ENCODE measurements at regions of chr16 and their contacts with region 1.

Region 1: GRCh38 chr16:89922884-89923690 is at the start of gene TUBB3:
- DNase-seq: peak; percentile 90

Region 2: DNA sequence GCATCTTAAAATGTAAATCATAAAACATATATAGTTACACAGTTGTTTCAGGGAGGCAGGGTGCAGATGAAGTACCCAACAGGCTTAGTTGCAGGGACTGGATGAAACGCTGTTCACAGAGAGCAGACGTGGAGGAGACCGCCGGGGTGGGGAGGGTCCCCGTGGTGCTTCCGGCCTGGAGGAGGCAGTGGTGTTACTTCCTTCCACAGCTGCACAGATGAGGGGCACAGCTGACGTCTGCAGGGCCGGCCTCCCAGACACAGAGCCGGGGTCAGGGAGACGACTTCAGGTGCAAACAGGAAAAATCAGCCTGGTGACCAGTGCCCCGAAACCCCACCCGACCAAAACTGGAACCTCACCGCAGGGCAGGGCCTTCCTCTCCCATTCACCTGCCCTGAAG is 77.7 kb before region 1 on chr16:
- CTCF ChIA-PET with region 1: no interaction called
- POLR2A ChIA-PET with region 1: no interaction called
- DNase-seq: no peak

Region 3: DNA sequence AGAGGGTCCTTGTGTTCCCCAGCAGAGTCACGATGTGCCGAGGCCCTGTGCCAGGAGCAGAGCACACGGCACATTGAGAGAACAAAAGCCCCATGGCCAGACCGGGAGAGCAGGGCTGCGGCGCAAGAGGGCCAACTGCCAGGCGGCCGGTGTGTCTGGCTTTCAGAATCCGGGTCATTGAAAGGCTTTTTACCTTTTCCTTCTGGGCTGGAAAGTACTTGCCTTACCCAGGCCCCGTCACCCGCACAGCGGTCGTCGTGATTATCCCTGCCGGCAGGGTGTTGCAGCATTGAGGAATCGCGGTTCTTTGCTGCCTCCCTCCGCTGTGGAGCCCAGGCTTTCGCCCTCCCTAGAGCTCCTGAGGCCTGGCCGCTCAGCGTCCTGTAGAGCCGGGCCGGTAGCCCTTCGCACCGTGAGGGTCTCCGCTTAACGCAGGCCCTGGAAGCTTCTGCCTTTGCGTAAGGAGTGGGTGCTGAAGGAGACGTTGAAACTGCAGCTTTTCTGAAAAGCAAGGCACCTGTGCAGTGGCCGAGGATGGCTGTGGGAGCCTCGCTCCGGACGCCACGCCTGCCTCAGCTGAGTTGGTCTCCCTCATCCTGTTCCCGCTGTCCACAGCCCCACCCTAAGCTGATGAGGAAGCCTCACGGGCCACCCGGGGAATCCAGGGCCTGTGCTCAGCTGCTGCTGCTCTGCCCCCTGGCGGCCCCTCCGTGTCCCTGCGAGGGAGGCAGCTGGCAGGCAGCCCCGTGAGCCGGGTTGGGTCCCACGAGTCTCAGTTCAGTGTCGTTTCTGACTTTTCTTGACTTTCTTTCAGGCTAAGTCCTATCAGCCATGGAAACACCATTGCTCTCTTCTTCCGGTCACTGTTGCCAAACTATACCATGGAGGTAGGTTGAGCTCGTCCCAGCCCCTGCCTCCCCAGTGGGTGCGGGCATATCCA is 13.0 kb before region 1 on chr16:
- CTCF ChIA-PET with region 1: interaction called, 16 read pairs
- POLR2A ChIA-PET with region 1: interaction called, 11 read pairs
- DNase-seq: peak; percentile 84

Region 4: GRCh38 chr16:89972244-89973234 is 49.5 kb after region 1 on chr16:
- CTCF ChIA-PET with region 1: no interaction called
- POLR2A ChIA-PET with region 1: interaction called, 12 read pairs
- DNase-seq: peak; percentile 100